CD14-positive monocyte (primary cell): ENCODE measurements at regions of chr2 and their contacts with region 1.

Region 1: GRCh38 chr2:71331581-71332434 is at the start of gene ZNF638:
- DNase-seq: peak; percentile 93 to 94 (median 93)
- H3K4me3 ChIP-seq: peak within 1 kb of the TSS; percentile 64 to 100 (median 96)
- H3K4me3 Mint-ChIP-seq: peak within 1 kb of the TSS; percentile 97 to 100
- H3K27ac ChIP-seq: peak within 1 kb of the TSS; percentile 97 to 99
- H3K27ac Mint-ChIP-seq: peak within 1 kb of the TSS; percentile 97 to 100 (median 100)
- H3K4me1 ChIP-seq: peaks cover 17 to 27% of the 10 kb centered on the region in 2 donors
- H3K4me1 Mint-ChIP-seq: peaks cover 31% of the 10 kb centered on the region
- H3K27me3 ChIP-seq: no peaks in the 10 kb centered on the region
- H3K27me3 Mint-ChIP-seq: no peaks in the 10 kb centered on the region
- CTCF ChIP-seq: peak; percentile 81
- polyA plus RNA-seq, gene ZNF638: 19.1 to 64.6 (median 22.4) TPM

Region 2: DNA sequence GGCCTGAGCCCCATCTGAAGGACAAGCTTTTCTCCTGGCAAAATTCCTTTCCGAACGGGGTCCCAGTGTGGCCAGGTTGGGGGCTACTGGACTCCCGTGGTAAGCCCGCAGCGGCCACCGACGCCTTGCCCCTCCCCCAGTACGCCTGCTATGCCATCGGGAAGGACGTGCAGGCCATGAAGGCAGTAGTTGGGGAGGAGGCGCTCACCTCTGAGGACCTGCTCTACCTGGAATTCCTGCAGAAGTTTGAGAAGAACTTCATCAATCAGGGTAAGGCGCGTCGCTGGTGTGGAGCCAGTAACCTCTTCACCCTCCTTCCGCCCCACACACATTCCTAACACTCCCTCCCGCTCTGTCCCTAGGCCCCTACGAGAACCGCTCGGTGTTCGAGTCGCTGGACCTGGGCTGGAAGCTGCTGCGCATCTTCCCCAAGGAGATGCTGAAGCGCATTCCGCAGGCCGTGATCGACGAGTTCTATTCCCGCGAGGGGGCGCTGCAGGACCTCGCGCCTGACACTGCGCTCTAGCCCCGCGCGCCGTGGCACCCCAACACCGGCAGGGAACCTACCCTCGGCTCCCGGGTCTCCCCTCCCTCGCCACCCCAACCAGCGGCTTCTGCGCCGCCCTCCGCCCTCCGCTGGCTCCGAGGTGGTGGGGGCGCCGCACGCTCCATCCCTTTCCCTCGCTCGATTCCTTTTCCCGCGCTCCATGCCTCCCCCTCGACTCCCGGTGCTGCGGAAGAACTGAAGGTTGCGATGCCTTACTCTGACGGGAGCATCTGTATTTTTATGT is 367.0 kb before region 1 on chr2:
- intact Hi-C with region 1: no loop called
- DNase-seq: peak; percentile 65 to 77 (median 77)
- H3K4me3 ChIP-seq: peak overlapping the region; percentile 27 to 76 (median 33)
- H3K4me3 Mint-ChIP-seq: peak overlapping the region; percentile 80 to 91
- H3K27ac ChIP-seq: no peak overlapping the region
- H3K27ac Mint-ChIP-seq: peak overlapping the region in 1 of 7 donors; percentile 41
- H3K4me1 ChIP-seq: peaks cover 9 to 10% of the 10 kb centered on the region in 2 donors
- H3K4me1 Mint-ChIP-seq: peaks cover 7% of the 10 kb centered on the region
- H3K27me3 ChIP-seq: peaks cover 4 to 30% of the 10 kb centered on the region in 2 donors
- H3K27me3 Mint-ChIP-seq: peaks cover 29 to 59% (median 55%) of the 10 kb centered on the region in 3 donors
- CTCF ChIP-seq: peak; percentile 92

Region 3: GRCh38 chr2:71181332-71181731 is 150.5 kb before region 1 on chr2:
- intact Hi-C with region 1: no loop called
- DNase-seq: no peak
- H3K4me3 ChIP-seq: no peak overlapping the region
- H3K4me3 Mint-ChIP-seq: no peak overlapping the region
- H3K27ac ChIP-seq: no peak overlapping the region
- H3K27ac Mint-ChIP-seq: no peak overlapping the region
- H3K4me1 ChIP-seq: peaks cover 0 to 7% of the 10 kb centered on the region in 2 donors
- H3K4me1 Mint-ChIP-seq: peaks cover 4% of the 10 kb centered on the region
- H3K27me3 ChIP-seq: no peaks in the 10 kb centered on the region
- H3K27me3 Mint-ChIP-seq: peaks cover 0 to 2% (median 0%) of the 10 kb centered on the region in 3 donors
- CTCF ChIP-seq: no peak

Region 4: GRCh38 chr2:71226965-71227560 is 104.7 kb before region 1 on chr2 and contains the start of gene PAIP2B:
- intact Hi-C with region 1: loop called in 1 of 2 experiments (anchors 5 kb)
- DNase-seq: peak; percentile 97 to 99 (median 97)
- H3K4me3 ChIP-seq: peak within 1 kb of the TSS; percentile 57 to 80 (median 69)
- H3K4me3 Mint-ChIP-seq: peak within 1 kb of the TSS; percentile 93 to 98
- H3K27ac ChIP-seq: peak within 1 kb of the TSS in 1 of 2 donors; percentile 50
- H3K27ac Mint-ChIP-seq: peak within 1 kb of the TSS; percentile 61 to 90 (median 83)
- H3K4me1 ChIP-seq: peaks cover 13 to 16% of the 10 kb centered on the region in 2 donors
- H3K4me1 Mint-ChIP-seq: peaks cover 13% of the 10 kb centered on the region
- H3K27me3 ChIP-seq: no peaks in the 10 kb centered on the region
- H3K27me3 Mint-ChIP-seq: peaks cover 1 to 9% (median 8%) of the 10 kb centered on the region in 3 donors
- CTCF ChIP-seq: no peak
- polyA plus RNA-seq, gene PAIP2B: 0.08 to 0.20 (median 0.17) TPM

Region 5: DNA sequence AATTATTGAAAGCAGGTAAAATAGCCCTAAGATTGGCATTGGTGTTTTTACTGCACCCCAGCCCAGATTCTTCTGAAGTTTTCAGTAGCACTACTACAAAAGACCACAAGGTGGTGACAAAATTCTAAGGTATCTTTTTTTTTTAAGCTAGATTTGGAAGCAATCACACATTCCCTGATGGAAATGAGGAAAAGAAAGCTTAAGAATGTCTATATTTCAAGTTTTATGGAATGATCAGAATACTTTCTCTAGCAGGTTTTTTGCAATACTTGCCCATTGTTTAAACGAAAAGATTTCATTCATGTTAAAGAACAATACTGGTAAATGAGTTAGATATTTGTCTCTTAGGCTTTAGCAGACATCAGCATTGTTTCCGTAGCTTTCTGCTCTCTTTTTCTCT is 32.3 kb before region 1 on chr2:
- intact Hi-C with region 1: loop called in 1 of 2 experiments (anchors 5 kb)
- DNase-seq: peak; percentile 6 to 27 (median 19)
- H3K4me3 ChIP-seq: no peak overlapping the region
- H3K4me3 Mint-ChIP-seq: no peak overlapping the region
- H3K27ac ChIP-seq: no peak overlapping the region
- H3K27ac Mint-ChIP-seq: no peak overlapping the region
- H3K4me1 ChIP-seq: no peaks in the 10 kb centered on the region
- H3K4me1 Mint-ChIP-seq: no peaks in the 10 kb centered on the region
- H3K27me3 ChIP-seq: no peaks in the 10 kb centered on the region
- H3K27me3 Mint-ChIP-seq: peaks cover 0 to 1% (median 0%) of the 10 kb centered on the region in 3 donors
- CTCF ChIP-seq: peak; percentile 84